ENCODE measurements at regions of chr15 and their contacts with region 1.

Region 1: GRCh38 chr15:52078876-52079700 is 33.5 kb downstream of the BCL2L10 start:
- DNase-seq: peak; percentile 63
- H3K4me3 ChIP-seq: no peak overlapping the region
- H3K27ac ChIP-seq: no peak overlapping the region
- H3K4me1 ChIP-seq: peaks cover 3% of the 10 kb centered on the region
- H3K27me3 ChIP-seq: no peaks in the 10 kb centered on the region
- CTCF ChIP-seq: peak; percentile 86 to 92
- POLR2A ChIP-seq: no peak

Region 2: GRCh38 chr15:51782357-51782896 is 296.7 kb before region 1 on chr15:
- CTCF ChIA-PET with region 1: interaction called, 3 read pairs
- POLR2A ChIA-PET with region 1: no interaction called
- dilution Hi-C with region 1: no loop called
- intact Hi-C with region 1: loop called (anchors 1 kb)
- DNase-seq: peak; percentile 25
- H3K4me3 ChIP-seq: no peak overlapping the region
- H3K27ac ChIP-seq: no peak overlapping the region
- H3K4me1 ChIP-seq: no peaks in the 10 kb centered on the region
- H3K27me3 ChIP-seq: peaks cover 0 to 3% of the 10 kb centered on the region in 2 experiments
- CTCF ChIP-seq: peak; percentile 39 to 45
- POLR2A ChIP-seq: no peak

Region 3: DNA sequence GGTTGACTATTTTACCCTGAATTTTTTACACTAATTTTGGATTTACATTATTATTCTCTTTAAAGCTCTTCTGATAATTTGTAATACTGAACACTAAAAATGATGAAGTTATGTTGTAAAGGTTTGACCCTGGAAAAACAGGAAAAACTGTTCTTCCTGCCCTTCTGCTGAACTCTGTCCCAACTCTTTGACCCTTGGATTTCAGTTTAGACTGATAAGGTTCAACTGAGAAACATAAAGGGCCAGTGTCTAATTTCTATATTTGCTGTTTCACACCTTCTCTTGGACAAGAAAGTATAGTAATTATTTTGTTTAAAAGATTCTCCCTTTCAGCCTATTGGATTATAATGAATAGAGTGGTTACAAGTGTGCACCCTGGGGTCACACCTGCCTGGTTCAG is 262.5 kb before region 1 on chr15:
- CTCF ChIA-PET with region 1: no interaction called
- POLR2A ChIA-PET with region 1: no interaction called
- dilution Hi-C with region 1: no loop called
- intact Hi-C with region 1: no loop called
- DNase-seq: peak; percentile 55
- H3K4me3 ChIP-seq: no peak overlapping the region
- H3K27ac ChIP-seq: no peak overlapping the region
- H3K4me1 ChIP-seq: peaks cover 5% of the 10 kb centered on the region
- H3K27me3 ChIP-seq: no peaks in the 10 kb centered on the region
- CTCF ChIP-seq: no peak
- POLR2A ChIP-seq: no peak

Region 4: DNA sequence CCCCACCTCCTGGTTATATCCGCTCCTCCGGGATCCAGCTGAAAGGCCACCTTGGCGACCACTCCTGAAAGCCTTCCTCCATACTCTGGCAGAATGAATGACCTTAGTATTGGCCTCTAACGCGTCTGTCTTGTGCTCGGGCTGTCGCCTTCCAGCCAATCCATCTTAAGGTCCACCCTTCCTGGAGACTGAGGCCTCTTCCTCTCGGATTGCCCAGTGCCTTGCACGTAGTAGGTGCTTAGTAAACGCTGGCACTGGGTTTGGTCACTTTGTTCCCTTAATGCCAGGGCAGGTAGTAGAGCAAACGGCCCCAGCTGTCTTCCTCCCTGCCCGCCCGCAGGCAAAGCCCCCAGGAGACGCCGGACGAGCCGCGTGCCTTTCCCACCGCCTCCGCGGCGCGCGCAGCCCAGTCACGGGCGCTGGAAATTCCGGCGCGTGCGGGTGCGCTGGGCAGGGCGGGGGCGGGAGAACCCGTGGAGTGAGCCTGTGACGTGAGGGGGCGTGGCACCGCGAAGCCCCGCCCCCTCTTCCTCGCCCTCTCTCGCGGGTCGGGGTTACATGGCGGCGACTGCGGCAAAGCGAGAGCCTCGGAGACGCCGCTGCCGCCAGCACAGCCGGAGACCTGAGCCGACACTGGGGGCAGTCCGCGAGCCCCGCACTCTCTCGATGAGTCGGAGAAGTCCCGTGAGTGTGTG is 60.2 kb before region 1 on chr15 and contains the start of gene MAPK6:
- CTCF ChIA-PET with region 1: interaction called, 20 read pairs
- POLR2A ChIA-PET with region 1: no interaction called
- dilution Hi-C with region 1: no loop called
- intact Hi-C with region 1: loop called (anchors 2 kb)
- DNase-seq: peak; percentile 93
- H3K4me3 ChIP-seq: peak within 1 kb of the TSS; percentile 73 to 99 (median 90)
- H3K27ac ChIP-seq: peak within 1 kb of the TSS; percentile 96
- H3K4me1 ChIP-seq: peaks cover 25% of the 10 kb centered on the region
- H3K27me3 ChIP-seq: no peaks in the 10 kb centered on the region
- CTCF ChIP-seq: no peak
- POLR2A ChIP-seq: peak; percentile 75
- total RNA-seq, gene MAPK6: 35.7 and 37.4 TPM in 2 replicates

Region 5: DNA sequence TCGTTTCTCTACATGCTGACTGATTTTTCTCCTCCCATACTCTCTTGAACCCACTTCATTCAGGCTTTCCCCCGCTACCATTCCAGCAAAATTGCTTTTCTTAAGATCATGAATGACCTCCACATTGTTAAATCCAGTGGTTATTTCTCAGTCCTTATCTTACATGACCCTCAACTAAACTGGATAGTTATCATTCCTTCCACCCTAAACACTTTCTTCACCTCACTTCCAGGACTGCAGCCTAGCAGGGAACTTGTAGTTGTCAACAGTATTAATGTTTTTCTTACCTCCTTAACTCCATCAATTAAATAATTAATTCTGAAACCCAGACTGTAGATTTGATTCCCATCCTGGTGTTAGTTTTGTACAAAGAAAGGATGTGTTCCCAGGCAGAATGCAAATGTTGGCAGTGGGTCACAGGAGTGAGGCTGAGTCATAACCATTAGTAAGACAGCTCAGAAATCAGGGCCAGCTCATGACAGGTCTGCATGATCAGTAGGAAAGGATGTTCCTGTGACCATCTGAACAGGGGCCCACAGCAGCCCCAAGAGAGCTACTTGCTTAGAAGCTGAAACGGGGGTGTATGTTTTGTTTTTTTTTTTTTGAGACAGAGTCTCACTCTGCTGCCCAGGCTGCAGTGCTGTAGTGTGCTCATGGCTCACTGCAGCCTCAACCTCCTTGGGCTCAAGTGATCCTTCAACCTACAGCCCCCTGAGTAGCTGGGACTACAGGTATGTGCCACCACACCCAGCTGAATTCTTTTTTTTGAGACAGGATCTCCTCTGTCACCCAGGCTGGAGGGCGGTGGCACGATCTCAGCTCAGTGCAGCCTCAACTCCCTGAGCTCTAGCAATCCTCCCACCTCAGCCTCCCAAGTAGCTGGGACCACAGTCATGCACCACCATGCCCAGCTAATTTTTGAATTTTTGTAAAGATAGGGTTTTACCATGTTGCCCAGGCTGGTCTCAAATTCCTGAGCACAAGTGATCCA is 24.4 kb after region 1 on chr15:
- CTCF ChIA-PET with region 1: interaction called, 13 read pairs
- POLR2A ChIA-PET with region 1: no interaction called
- dilution Hi-C with region 1: no loop called
- intact Hi-C with region 1: no loop called
- DNase-seq: peak; percentile 98
- H3K4me3 ChIP-seq: no peak overlapping the region
- H3K27ac ChIP-seq: peak overlapping the region; percentile 77
- H3K4me1 ChIP-seq: peaks cover 19% of the 10 kb centered on the region
- H3K27me3 ChIP-seq: no peaks in the 10 kb centered on the region
- CTCF ChIP-seq: no peak
- POLR2A ChIP-seq: no peak

Region 6: GRCh38 chr15:52171386-52171785 is 92.3 kb after region 1 on chr15:
- CTCF ChIA-PET with region 1: interaction called, 10 read pairs
- POLR2A ChIA-PET with region 1: no interaction called
- dilution Hi-C with region 1: no loop called
- intact Hi-C with region 1: no loop called
- DNase-seq: peak; percentile 52
- H3K4me3 ChIP-seq: no peak overlapping the region
- H3K27ac ChIP-seq: no peak overlapping the region
- H3K4me1 ChIP-seq: no peaks in the 10 kb centered on the region
- H3K27me3 ChIP-seq: no peaks in the 10 kb centered on the region
- CTCF ChIP-seq: peak in 1 of 2 donors; percentile 23
- POLR2A ChIP-seq: no peak